Activated T-helper 1 cell treated with anti-CD3 and anti-CD28 coated beads, Interleukin-12 subunit alpha, Interleukin-12 subunit beta, Interleukin-2, Interleukin-4 antibody, amounts not matched to agents 30 ng/mL and 10 ng/mL and 1 ng/mL, durations not matched to agents 14 hours and 24 hours and 36 hours (primary cell): ENCODE measurements at regions of chr11 and their contacts with region 1.

Region 1: DNA sequence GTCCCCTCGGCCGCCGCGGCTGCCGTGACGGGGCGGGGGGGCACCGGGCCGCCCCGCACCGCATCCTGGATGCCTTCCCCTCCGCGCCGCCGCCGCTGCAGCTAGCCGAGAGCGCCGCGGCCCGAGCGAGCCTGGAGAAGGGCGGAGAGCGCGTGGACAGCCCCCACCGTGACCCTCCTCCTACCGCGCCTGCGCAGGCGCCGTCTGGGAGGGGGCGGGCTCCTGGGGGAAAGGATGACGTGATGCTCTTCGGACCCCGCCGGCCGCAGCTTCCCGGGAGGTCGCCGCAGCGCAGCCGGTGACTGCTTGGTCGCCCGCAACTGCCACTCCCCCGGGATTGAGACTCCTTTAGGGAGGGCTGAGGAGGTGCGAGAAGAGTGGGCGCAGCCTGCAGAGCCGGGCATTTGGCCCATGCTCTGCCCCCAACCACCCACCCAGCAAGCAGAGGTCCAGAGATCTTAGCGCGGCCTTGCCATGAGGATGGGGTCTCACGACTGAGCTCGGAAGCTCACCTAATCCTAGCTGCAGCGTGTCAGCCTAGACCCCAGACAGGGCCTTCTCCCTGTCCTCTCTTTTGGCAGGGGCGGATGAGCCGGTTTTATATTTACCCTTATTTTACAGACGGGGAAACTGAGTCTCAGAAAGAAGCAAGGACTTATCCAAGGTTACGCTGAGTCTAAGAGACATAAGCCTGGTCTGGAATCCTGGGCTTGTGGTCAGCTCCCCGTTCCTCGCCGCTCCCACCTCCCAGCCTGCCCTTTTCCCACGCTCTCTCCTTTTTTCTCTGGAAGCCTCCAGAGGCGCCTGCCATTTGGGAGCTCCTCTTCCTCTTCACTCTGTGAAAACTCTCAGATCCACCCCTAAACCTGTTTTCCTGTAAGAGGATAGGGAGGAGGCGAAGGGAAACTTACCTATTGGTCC is at the start of gene DENND5A:
- DNase-seq: peak; percentile 36
- H3K4me3 Mint-ChIP-seq: peak within 1 kb of the TSS; percentile 82
- H3K27ac Mint-ChIP-seq: peak within 1 kb of the TSS; percentile 80
- H3K4me1 Mint-ChIP-seq: peaks cover 33% of the 10 kb centered on the region
- H3K27me3 Mint-ChIP-seq: peaks cover 35% of the 10 kb centered on the region
- total RNA-seq, gene DENND5A: 45.6 and 47.6 TPM in 2 replicates

Region 2: GRCh38 chr11:9060700-9061111 is 204.8 kb before region 1 on chr11:
- intact Hi-C with region 1: loop called (anchors 2 kb)
- DNase-seq: peak; percentile 48
- H3K4me3 Mint-ChIP-seq: no peak overlapping the region
- H3K27ac Mint-ChIP-seq: peak overlapping the region; percentile 40
- H3K4me1 Mint-ChIP-seq: peaks cover 12% of the 10 kb centered on the region
- H3K27me3 Mint-ChIP-seq: peaks cover 16% of the 10 kb centered on the region

Region 3: DNA sequence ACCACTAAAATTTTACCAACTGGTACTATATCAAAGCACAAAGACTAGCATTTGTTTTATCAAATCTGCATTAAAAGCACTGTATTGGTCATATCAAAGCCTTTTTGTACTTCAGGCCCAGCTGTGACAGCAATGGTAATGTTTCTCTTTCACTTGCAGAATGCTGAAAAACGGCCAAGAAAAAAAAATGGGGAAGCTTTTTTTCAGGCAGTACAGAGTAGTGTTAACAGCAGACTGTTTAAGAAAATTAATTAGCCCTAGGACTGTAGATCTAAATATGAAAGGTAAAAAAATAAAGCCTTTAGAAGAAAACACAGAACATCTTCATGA is 33.7 kb before region 1 on chr11:
- intact Hi-C with region 1: loop called (anchors 1 kb)
- DNase-seq: no peak
- H3K4me3 Mint-ChIP-seq: peak overlapping the region; percentile 49
- H3K27ac Mint-ChIP-seq: peak overlapping the region; percentile 27
- H3K4me1 Mint-ChIP-seq: peaks cover 34% of the 10 kb centered on the region
- H3K27me3 Mint-ChIP-seq: no peaks in the 10 kb centered on the region

Region 4: GRCh38 chr11:9363954-9364912 is 98.8 kb after region 1 on chr11:
- intact Hi-C with region 1: loop called (anchors 1 kb)
- DNase-seq: peak; percentile 76
- H3K4me3 Mint-ChIP-seq: peak overlapping the region; percentile 82
- H3K27ac Mint-ChIP-seq: peak overlapping the region; percentile 90
- H3K4me1 Mint-ChIP-seq: peaks cover 28% of the 10 kb centered on the region
- H3K27me3 Mint-ChIP-seq: peaks cover 5% of the 10 kb centered on the region

Region 5: DNA sequence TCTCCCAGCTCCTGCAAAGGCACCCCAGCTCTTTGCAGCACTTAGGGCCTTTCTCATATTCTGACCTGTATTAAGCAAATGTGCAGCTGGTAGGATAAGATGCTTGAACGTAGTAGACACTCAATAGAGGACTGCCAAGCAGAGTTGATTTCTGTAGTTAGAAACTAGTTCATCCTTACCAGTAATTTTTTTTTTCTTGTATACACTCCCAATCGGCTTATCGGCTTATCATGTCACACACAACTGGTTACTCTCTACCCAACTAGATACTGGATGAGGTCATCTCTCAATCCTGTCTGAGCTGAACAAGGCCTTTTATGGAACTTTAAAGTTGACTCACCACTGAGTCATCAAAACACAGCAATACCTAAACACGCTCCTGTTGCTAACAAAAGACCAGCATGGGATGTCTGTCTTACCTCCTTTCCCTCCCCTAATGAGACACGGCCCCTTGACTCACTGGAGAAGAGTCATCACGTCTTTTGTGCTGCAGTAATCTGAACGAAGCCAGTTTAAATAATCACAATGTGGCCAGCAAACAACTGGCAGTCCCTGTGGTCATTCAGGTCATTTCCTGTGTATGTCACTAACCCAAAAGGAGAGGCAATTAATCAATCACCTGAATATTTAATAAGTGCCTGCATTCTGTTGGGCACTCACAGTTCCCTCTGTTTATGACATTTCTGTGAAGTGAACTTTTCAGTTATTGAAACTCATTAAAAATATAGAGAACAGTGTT is 300.5 kb after region 1 on chr11:
- intact Hi-C with region 1: loop called (anchors 1 kb)
- DNase-seq: peak; percentile 67
- H3K4me3 Mint-ChIP-seq: peak overlapping the region; percentile 13
- H3K27ac Mint-ChIP-seq: peak overlapping the region; percentile 82
- H3K4me1 Mint-ChIP-seq: peaks cover 37% of the 10 kb centered on the region
- H3K27me3 Mint-ChIP-seq: peaks cover 4% of the 10 kb centered on the region